ENCODE measurements at regions of chr17 and their contacts with region 1.

Region 1: GRCh38 chr17:27760069-27760885 is 40.1 kb downstream of the NOS2 start:
- DNase-seq: peak; percentile 32
- ATAC-seq: peak; percentile 79
- H3K4me3 ChIP-seq: no peak overlapping the region
- H3K27ac ChIP-seq: no peak overlapping the region
- H3K4me1 ChIP-seq: no peaks in the 10 kb centered on the region
- H3K27me3 ChIP-seq: no peaks in the 10 kb centered on the region; a peak in 1 of 5 replicates
- CTCF ChIP-seq: peak; percentile 86
- EP300 ChIP-seq: no peak
- POLR2A ChIP-seq: no peak
- RAD21 ChIP-seq: peak; percentile 58; the same call in 1 of the 2 replicates

Region 2: GRCh38 chr17:27609611-27610303 is 150.5 kb before region 1 on chr17:
- CTCF ChIA-PET with region 1: no interaction called
- POLR2A ChIA-PET with region 1: no interaction called
- in situ Hi-C with region 1: no loop called
- intact Hi-C with region 1: loop called (anchors 2 kb)
- DNase-seq: peak; percentile 45
- ATAC-seq: peak; percentile 91
- H3K4me3 ChIP-seq: no peak overlapping the region
- H3K27ac ChIP-seq: no peak overlapping the region
- H3K4me1 ChIP-seq: no peaks in the 10 kb centered on the region
- H3K27me3 ChIP-seq: no peaks in the 10 kb centered on the region
- CTCF ChIP-seq: peak; percentile 78
- EP300 ChIP-seq: no peak
- POLR2A ChIP-seq: no peak
- RAD21 ChIP-seq: peak; percentile 61

Region 3: GRCh38 chr17:27654654-27655524 is 105.4 kb before region 1 on chr17:
- CTCF ChIA-PET with region 1: interaction called, 44 read pairs
- POLR2A ChIA-PET with region 1: no interaction called
- in situ Hi-C with region 1: loop called (anchors 5 kb)
- intact Hi-C with region 1: no loop called
- DNase-seq: peak; percentile 85
- ATAC-seq: peak; percentile 98
- H3K4me3 ChIP-seq: no peak overlapping the region
- H3K27ac ChIP-seq: no peak overlapping the region
- H3K4me1 ChIP-seq: no peaks in the 10 kb centered on the region
- H3K27me3 ChIP-seq: peaks cover 0 to 4% of the 10 kb centered on the region in 2 experiments; a peak in 3 of 5 replicates
- CTCF ChIP-seq: peak; percentile 87
- EP300 ChIP-seq: no peak
- POLR2A ChIP-seq: no peak
- RAD21 ChIP-seq: peak; percentile 77

Region 4: DNA sequence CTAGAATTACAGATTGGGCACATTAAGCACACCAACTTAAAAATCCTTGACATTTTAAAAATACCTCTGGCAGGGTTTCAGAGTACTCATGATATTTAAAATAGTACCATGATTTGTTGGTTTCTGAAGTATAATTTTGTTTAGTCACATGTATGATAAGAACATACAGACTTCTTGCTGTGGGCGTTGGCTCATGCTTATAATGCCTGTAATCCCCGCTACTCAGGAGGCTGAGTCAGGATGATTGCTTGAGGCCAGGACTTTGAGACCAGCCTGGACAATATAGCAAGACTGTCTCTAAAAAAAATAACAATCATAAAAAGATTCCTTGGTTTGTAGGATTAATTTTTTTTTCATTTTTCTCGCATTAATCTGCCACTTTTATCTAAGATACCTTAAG is 38.5 kb before region 1 on chr17:
- CTCF ChIA-PET with region 1: no interaction called
- POLR2A ChIA-PET with region 1: no interaction called
- in situ Hi-C with region 1: no loop called
- intact Hi-C with region 1: no loop called
- DNase-seq: no peak
- ATAC-seq: no peak
- H3K4me3 ChIP-seq: no peak overlapping the region
- H3K27ac ChIP-seq: no peak overlapping the region
- H3K4me1 ChIP-seq: no peaks in the 10 kb centered on the region
- H3K27me3 ChIP-seq: no peaks in the 10 kb centered on the region; a peak in 2 of 5 replicates
- CTCF ChIP-seq: no peak
- EP300 ChIP-seq: no peak
- POLR2A ChIP-seq: no peak
- RAD21 ChIP-seq: no peak

Region 5: DNA sequence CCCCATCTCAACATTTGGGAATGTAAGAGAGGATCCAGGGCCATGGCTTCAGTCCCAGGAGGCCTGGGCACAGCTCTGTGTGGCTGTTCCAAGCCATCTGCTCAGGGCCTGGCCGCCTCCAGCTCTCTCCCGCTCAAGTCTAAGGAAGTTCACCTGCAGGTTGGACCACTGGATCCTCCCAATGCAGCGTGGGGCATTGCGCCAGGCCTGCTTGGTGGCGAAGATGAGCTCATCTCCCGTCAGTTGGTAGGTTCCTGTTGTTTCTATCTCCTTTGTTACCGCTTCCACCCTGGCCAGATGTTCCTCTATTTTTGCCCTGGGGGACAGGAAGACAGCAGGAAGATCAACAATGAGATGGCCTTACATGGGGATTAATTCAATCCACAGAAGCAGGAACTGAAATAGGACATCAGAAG is 22.5 kb after region 1 on chr17:
- CTCF ChIA-PET with region 1: no interaction called
- POLR2A ChIA-PET with region 1: no interaction called
- in situ Hi-C with region 1: no loop called
- intact Hi-C with region 1: no loop called
- DNase-seq: no peak
- ATAC-seq: no peak
- H3K4me3 ChIP-seq: no peak overlapping the region
- H3K27ac ChIP-seq: no peak overlapping the region
- H3K4me1 ChIP-seq: peaks cover 8% of the 10 kb centered on the region; the same call in 1 of the 2 replicates
- H3K27me3 ChIP-seq: no peaks in the 10 kb centered on the region; a peak in 1 of 5 replicates
- CTCF ChIP-seq: no peak
- EP300 ChIP-seq: no peak
- POLR2A ChIP-seq: no peak
- RAD21 ChIP-seq: no peak

Region 6: DNA sequence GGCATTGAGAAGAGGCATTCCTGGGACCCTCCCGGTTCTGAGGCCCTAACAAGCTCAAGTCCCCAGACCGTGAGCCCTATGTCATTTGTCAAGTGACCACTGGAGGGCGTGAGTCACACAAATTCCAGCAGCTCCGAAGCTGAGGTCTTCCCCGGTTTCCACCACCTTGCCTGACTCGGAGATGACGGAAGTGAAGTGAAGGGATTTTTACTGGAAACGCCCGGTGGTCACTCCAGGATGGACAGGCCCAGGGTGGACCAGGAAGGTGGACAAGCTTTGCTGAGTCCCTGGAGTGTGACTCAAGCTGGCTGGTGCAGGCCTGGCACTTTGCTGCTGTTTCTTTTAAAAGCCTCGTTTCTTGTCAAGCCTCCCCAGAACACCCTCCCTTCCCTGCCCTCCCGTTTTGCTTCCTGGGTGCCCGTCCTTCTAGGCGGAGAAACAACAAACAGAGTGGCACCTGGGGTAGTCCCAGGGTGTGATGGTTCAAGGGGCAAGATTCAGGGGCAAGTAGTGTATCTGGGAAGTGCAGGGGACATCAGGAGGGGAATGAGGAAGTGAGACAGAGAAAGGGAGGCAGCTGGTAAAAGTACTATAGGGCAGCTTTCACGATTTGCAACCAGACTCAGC is 45.4 kb after region 1 on chr17:
- CTCF ChIA-PET with region 1: no interaction called
- POLR2A ChIA-PET with region 1: no interaction called
- in situ Hi-C with region 1: no loop called
- intact Hi-C with region 1: loop called (anchors 1 kb)
- DNase-seq: peak; percentile 78
- ATAC-seq: peak; percentile 94
- H3K4me3 ChIP-seq: peak overlapping the region; percentile 23 to 55 (median 27); a peak in 3 of 6 replicates
- H3K27ac ChIP-seq: no peak overlapping the region
- H3K4me1 ChIP-seq: peaks cover 17% of the 10 kb centered on the region
- H3K27me3 ChIP-seq: 0 out of 5 replicates have a peak, but pooled peaks cover 0 to 1% of the 10 kb centered on the region in 2 experiments
- CTCF ChIP-seq: peak; percentile 95
- EP300 ChIP-seq: no peak
- POLR2A ChIP-seq: no peak
- RAD21 ChIP-seq: peak; percentile 78

Region 7: DNA sequence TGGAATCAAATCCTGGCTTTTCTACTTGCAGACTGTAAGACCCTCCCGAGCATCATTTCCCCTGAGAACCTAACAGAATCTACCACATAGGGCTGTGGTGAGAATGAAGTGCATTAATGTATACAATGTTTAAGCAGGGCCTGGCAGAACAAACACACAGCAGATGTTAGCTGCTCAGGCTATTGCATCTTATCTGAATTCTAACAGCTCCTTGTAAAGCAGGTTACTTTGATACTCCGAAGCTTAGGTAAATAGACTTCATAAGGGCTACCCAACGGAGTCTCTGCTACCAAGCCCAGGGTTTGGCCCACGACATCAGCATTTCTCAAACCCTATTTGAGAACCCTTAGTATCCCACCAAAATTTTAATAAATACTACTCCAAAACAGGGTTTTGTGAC is 64.5 kb after region 1 on chr17:
- CTCF ChIA-PET with region 1: no interaction called
- POLR2A ChIA-PET with region 1: no interaction called
- in situ Hi-C with region 1: no loop called
- intact Hi-C with region 1: no loop called
- DNase-seq: no peak
- ATAC-seq: no peak
- H3K4me3 ChIP-seq: no peak overlapping the region
- H3K27ac ChIP-seq: no peak overlapping the region
- H3K4me1 ChIP-seq: no peaks in the 10 kb centered on the region
- H3K27me3 ChIP-seq: no peaks in the 10 kb centered on the region
- CTCF ChIP-seq: no peak
- EP300 ChIP-seq: no peak
- POLR2A ChIP-seq: no peak
- RAD21 ChIP-seq: no peak

Region 8: DNA sequence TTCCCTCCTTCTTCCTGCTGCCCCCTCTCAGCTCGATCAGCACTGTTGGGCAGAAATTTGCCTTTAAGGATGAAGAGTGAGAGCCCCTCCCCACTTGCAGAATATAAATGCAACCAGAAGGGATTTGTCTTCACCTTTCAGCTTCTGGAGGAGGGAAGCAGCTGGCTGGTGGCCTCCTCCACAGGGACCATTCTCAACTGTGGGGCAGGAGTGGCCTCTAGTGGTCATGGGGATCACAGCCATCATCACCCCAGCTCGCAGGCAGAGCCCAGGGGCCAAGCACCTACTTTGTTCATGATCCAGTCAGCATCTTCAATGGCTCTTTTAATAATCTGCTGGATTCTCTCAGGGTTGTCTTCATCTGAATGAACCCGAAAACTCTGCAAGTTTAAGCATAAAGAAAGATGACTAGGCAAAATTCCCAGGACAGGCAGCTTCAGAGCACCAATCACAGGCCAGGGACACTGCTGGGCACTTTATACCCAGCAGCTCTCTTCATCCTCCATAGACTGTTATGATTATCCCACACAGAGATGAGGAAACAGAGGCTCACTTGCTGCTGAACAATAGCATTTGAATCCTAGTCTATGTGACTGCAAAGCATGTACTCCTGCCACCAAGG is 119.8 kb after region 1 on chr17:
- CTCF ChIA-PET with region 1: interaction called, 32 read pairs
- POLR2A ChIA-PET with region 1: no interaction called
- in situ Hi-C with region 1: loop called (anchors 5 kb)
- intact Hi-C with region 1: loop called (anchors 1 kb)
- DNase-seq: peak; percentile 48
- ATAC-seq: peak; percentile 97
- H3K4me3 ChIP-seq: no peak overlapping the region
- H3K27ac ChIP-seq: no peak overlapping the region
- H3K4me1 ChIP-seq: no peaks in the 10 kb centered on the region
- H3K27me3 ChIP-seq: no peaks in the 10 kb centered on the region; a peak in 1 of 5 replicates
- CTCF ChIP-seq: peak; percentile 92
- EP300 ChIP-seq: no peak
- POLR2A ChIP-seq: no peak
- RAD21 ChIP-seq: peak; percentile 85